SK-N-SH (cell line): ENCODE measurements at regions of chr1 and their contacts with region 1.

Region 1: GRCh38 chr1:204806943-204807687 is 63.5 kb upstream of the NFASC start:
- DNase-seq: peak; percentile 89
- H3K4me3 ChIP-seq: peak overlapping the region; percentile 50 to 81
- H3K27ac ChIP-seq: no peak overlapping the region; a peak in 1 of 4 replicates
- H3K4me1 ChIP-seq: peaks cover 0 to 2% of the 10 kb centered on the region in 2 experiments; a peak in 1 of 4 replicates
- H3K27me3 ChIP-seq: 0 out of 2 replicates have a peak, but pooled peaks cover 2% of the 10 kb centered on the region
- CTCF ChIP-seq: peak; percentile 100
- EP300 ChIP-seq: no peak
- RAD21 ChIP-seq: peak; percentile 72

Region 2: GRCh38 chr1:204296431-204296988 is 510.6 kb before region 1 on chr1:
- CTCF ChIA-PET with region 1: no interaction called
- POLR2A ChIA-PET with region 1: no interaction called
- DNase-seq: no peak
- H3K4me3 ChIP-seq: no peak overlapping the region
- H3K27ac ChIP-seq: peak overlapping the region in 1 of 2 experiments; percentile 100; a peak in 2 of 4 replicates
- H3K4me1 ChIP-seq: peaks cover 0 to 91% of the 10 kb centered on the region in 2 experiments; a peak in 2 of 4 replicates
- H3K27me3 ChIP-seq: peaks cover 27% of the 10 kb centered on the region
- CTCF ChIP-seq: no peak
- EP300 ChIP-seq: 0 out of 4 replicates have a peak, but pooled peaks of 1 of the 2 experiments have one; percentile 13
- RAD21 ChIP-seq: peak; percentile 50

Region 3: GRCh38 chr1:204530932-204531331 is 276.2 kb before region 1 on chr1:
- CTCF ChIA-PET with region 1: interaction called, 26 read pairs
- POLR2A ChIA-PET with region 1: no interaction called
- DNase-seq: no peak
- H3K4me3 ChIP-seq: no peak overlapping the region
- H3K27ac ChIP-seq: no peak overlapping the region
- H3K4me1 ChIP-seq: no peaks in the 10 kb centered on the region
- H3K27me3 ChIP-seq: no peaks in the 10 kb centered on the region
- CTCF ChIP-seq: no peak
- EP300 ChIP-seq: no peak
- RAD21 ChIP-seq: no peak

Region 4: DNA sequence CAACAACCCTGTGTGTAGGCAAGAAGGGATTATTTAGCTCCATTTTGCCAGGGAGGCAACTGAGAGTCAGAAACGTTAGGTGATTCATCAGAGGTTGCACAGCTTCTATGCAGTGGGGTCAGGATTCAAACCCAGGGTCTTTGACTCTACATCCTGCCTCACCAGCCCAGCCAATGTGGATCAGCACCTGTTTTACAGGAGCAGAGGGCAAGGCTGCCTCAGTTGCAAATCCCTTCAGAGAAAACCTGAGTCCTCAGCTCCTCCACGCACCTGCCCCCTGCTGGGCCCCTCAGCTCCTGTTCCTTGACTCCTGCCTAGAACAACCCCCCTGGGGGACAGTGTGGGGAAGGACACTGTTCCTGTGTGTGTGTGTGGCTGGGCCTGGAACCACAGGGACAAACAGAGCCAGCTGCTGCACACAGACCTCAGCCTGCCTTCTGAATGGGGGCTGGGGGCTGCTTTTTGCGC is 183.2 kb before region 1 on chr1:
- CTCF ChIA-PET with region 1: interaction called, 30 read pairs
- POLR2A ChIA-PET with region 1: no interaction called
- DNase-seq: peak; percentile 72
- H3K4me3 ChIP-seq: no peak overlapping the region
- H3K27ac ChIP-seq: no peak overlapping the region
- H3K4me1 ChIP-seq: peaks cover 0 to 16% of the 10 kb centered on the region in 2 experiments; a peak in 1 of 4 replicates
- H3K27me3 ChIP-seq: no peaks in the 10 kb centered on the region
- CTCF ChIP-seq: no peak; the same call in 1 of the 2 replicates
- EP300 ChIP-seq: no peak
- RAD21 ChIP-seq: peak; percentile 26

Region 5: GRCh38 chr1:204714861-204715511 is 92.1 kb before region 1 on chr1:
- CTCF ChIA-PET with region 1: interaction called, 11 read pairs
- POLR2A ChIA-PET with region 1: no interaction called
- DNase-seq: peak; percentile 50
- H3K4me3 ChIP-seq: no peak overlapping the region
- H3K27ac ChIP-seq: no peak overlapping the region
- H3K4me1 ChIP-seq: peaks cover 0 to 11% of the 10 kb centered on the region in 2 experiments; a peak in 1 of 4 replicates
- H3K27me3 ChIP-seq: peaks cover 17% of the 10 kb centered on the region; the same call in 1 of the 2 replicates
- CTCF ChIP-seq: no peak
- EP300 ChIP-seq: no peak
- RAD21 ChIP-seq: peak; percentile 20; the same call in 1 of the 2 replicates

Region 6: DNA sequence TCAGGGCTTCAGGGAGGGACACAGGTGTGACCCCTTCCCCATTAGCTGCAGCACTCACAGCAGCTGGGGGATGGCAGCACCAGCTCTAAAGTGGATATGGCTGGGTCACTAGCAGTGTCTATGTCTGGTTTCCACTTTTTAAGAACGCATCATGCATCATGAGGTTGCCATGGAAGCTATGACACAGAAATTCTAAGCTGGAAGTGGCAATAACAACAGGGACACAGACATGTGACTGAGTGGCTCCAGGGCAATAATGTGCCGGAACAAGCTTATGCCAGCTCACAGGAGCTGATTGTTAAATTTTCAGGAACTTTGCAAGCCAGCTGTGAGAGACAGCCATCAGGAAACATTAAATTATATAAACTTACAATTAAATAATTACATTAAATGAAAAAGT is 12.4 kb after region 1 on chr1:
- CTCF ChIA-PET with region 1: interaction called, 291 read pairs
- POLR2A ChIA-PET with region 1: no interaction called
- DNase-seq: peak; percentile 50
- H3K4me3 ChIP-seq: no peak overlapping the region
- H3K27ac ChIP-seq: no peak overlapping the region
- H3K4me1 ChIP-seq: peaks cover 0 to 17% of the 10 kb centered on the region in 2 experiments; a peak in 2 of 4 replicates
- H3K27me3 ChIP-seq: peaks cover 16% of the 10 kb centered on the region
- CTCF ChIP-seq: no peak
- EP300 ChIP-seq: peak in 1 of 2 experiments; percentile 56; a peak in 1 of 4 replicates
- RAD21 ChIP-seq: peak; percentile 40; the same call in 1 of the 2 replicates

Region 7: DNA sequence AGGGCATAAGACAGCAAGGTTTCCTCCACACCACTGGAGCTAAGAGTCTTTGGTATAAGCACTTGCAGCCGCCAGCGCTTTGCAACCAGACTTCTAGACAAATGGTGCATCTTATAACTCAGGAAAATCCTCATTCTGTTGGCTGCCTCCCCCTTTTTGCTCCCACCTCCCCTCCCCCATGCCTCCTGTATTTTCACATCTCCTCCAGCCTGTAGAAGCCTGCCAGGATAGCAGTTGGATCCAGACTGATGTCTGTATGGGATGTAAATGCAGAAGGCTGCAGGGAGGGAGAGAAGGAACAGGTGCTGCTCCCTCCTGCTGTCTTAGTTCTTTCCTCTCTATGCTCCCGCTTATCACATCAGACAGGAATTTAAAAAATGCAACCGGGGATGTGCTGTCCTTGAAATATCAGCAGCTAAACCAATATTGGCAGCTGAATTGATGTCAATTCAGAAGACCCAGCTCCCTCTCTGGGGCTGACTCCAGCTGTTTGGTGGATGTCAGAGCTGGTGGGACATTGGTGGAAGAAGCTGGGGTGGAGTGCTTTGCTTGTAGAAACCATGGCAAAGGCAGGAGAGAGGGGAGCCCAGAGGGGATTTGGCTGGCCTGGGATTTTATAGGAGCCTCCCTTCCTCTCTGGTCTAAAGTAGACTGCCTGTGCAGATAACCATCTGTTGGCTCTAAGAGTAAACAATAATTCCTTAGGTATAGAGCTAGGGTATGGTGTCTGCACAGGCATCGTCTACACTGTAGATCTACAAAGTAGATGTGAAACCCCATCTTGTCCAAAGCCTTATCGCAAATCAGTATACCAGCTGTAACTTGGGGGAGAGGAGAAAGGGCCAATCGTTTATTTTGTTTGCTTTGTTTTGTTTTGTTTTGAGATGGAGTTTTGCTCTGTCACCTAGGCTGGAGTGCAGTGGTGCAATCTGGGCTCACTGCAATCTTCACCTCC is 117.2 kb after region 1 on chr1:
- CTCF ChIA-PET with region 1: interaction called, 44 read pairs
- POLR2A ChIA-PET with region 1: no interaction called
- DNase-seq: no peak
- H3K4me3 ChIP-seq: no peak overlapping the region
- H3K27ac ChIP-seq: no peak overlapping the region
- H3K4me1 ChIP-seq: no peaks in the 10 kb centered on the region
- H3K27me3 ChIP-seq: no peaks in the 10 kb centered on the region
- CTCF ChIP-seq: no peak
- EP300 ChIP-seq: no peak
- RAD21 ChIP-seq: no peak

Region 8: GRCh38 chr1:205255941-205256780 is 449.0 kb after region 1 on chr1:
- CTCF ChIA-PET with region 1: interaction called, 15 read pairs
- POLR2A ChIA-PET with region 1: no interaction called
- DNase-seq: peak; percentile 90
- H3K4me3 ChIP-seq: no peak overlapping the region; a peak in 1 of 4 replicates
- H3K27ac ChIP-seq: no peak overlapping the region
- H3K4me1 ChIP-seq: peaks cover 14 to 19% of the 10 kb centered on the region in 2 experiments; a peak in 3 of 4 replicates
- H3K27me3 ChIP-seq: no peaks in the 10 kb centered on the region
- CTCF ChIP-seq: peak; percentile 94
- EP300 ChIP-seq: no peak
- RAD21 ChIP-seq: peak; percentile 100